Naive thymus-derived CD4-positive, alpha-beta T cell (primary cell): ENCODE measurements at regions of chr2 and their contacts with region 1.

Region 1: GRCh38 chr2:108607706-108608301 is 73.5 kb downstream of the LIMS1 start:
- DNase-seq: peak in 7 of 9 donors; percentile 30 to 61 (median 53)
- ATAC-seq: peak; percentile 45
- H3K4me3 ChIP-seq: no peak overlapping the region
- H3K4me3 Mint-ChIP-seq: no peak overlapping the region
- H3K27ac ChIP-seq: no peak overlapping the region
- H3K27ac Mint-ChIP-seq: no peak overlapping the region
- H3K4me1 ChIP-seq: peaks cover 4 to 14% of the 10 kb centered on the region in 2 donors
- H3K4me1 Mint-ChIP-seq: peaks cover 20 to 68% (median 26%) of the 10 kb centered on the region in 7 donors
- H3K27me3 ChIP-seq: no peaks in the 10 kb centered on the region
- H3K27me3 Mint-ChIP-seq: no peaks in the 10 kb centered on the region

Region 2: DNA sequence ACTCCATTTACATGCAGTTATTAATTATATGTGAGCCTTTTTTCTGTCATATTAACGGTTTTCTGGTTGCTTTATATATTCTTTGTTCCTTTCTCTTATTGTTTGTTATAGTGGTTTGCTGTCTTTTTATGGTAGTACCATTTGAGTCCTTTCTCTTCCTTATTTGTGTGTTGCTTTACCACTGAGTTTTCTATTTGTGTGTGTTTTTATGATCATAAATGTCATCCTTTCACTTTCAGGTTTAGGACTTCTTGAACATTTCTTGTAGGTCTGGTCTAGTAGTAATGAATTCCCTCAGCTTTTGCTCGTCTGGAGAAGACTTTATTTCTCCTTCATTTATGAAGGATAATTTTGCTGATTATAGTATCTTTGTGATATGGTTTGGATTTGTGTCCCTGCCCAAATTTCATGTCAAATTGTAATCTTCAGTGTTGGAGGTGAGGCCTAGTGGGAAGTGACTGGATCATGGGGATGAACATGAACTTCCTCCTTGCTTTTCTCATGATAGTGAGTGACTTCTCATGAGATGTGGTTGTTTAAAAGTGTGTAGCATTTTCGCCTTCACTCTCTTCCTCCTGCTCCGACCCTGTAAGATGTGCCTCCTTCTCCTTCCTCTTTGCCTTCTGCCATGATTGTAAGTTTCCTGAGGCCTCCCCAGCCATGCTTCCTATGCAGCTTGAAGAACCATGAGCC is 147.3 kb before region 1 on chr2:
- CTCF ChIA-PET with region 1: no interaction called
- POLR2A ChIA-PET with region 1: no interaction called
- intact Hi-C with region 1: no loop called
- DNase-seq: no peak
- ATAC-seq: no peak
- H3K4me3 ChIP-seq: no peak overlapping the region
- H3K4me3 Mint-ChIP-seq: peak overlapping the region in 4 of 10 donors; percentile 2 to 28 (median 22)
- H3K27ac ChIP-seq: no peak overlapping the region
- H3K27ac Mint-ChIP-seq: peak overlapping the region in 6 of 9 donors; percentile 14 to 69 (median 29)
- H3K4me1 ChIP-seq: peaks cover 0 to 3% of the 10 kb centered on the region in 2 donors
- H3K4me1 Mint-ChIP-seq: peaks cover 27 to 82% (median 74%) of the 10 kb centered on the region in 7 donors
- H3K27me3 ChIP-seq: no peaks in the 10 kb centered on the region
- H3K27me3 Mint-ChIP-seq: no peaks in the 10 kb centered on the region

Region 3: GRCh38 chr2:108587621-108588020 is 20.2 kb before region 1 on chr2:
- CTCF ChIA-PET with region 1: no interaction called
- POLR2A ChIA-PET with region 1: no interaction called
- intact Hi-C with region 1: no loop called
- DNase-seq: no peak
- ATAC-seq: peak; percentile 28
- H3K4me3 ChIP-seq: no peak overlapping the region
- H3K4me3 Mint-ChIP-seq: no peak overlapping the region
- H3K27ac ChIP-seq: no peak overlapping the region
- H3K27ac Mint-ChIP-seq: peak overlapping the region in 5 of 9 donors; percentile 7 to 65 (median 40)
- H3K4me1 ChIP-seq: no peaks in the 10 kb centered on the region
- H3K4me1 Mint-ChIP-seq: peaks cover 14 to 44% (median 25%) of the 10 kb centered on the region in 7 donors
- H3K27me3 ChIP-seq: no peaks in the 10 kb centered on the region
- H3K27me3 Mint-ChIP-seq: no peaks in the 10 kb centered on the region

Region 4: DNA sequence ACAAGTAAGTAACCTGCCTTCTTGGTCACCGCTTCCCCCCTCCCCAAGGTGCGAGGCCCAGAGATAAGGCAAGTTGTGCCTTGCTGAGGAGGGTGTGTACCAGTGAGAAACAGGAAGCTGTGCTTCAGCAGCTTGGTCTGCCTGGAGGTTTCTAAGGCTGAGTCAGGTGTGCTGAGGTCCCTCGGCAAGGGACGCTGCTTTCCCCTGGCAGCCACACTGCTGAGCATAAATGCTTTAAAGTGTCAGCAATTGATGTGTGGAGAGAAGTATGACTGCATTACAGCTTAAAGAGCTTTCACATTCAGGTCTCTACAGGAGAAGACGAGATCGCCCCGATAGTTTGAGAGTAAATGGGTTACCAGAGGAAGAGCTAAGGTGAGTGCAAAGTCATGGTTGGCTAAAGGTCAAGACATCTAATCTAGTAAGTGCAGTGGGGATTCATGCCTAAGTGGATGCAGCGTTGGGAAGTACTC is 13.3 kb after region 1 on chr2:
- CTCF ChIA-PET with region 1: interaction called, 10 read pairs
- POLR2A ChIA-PET with region 1: interaction called, 13 read pairs
- intact Hi-C with region 1: loop called (anchors 1 kb)
- DNase-seq: peak; percentile 32 to 80 (median 75)
- ATAC-seq: peak; percentile 97
- H3K4me3 ChIP-seq: peak overlapping the region; percentile 59
- H3K4me3 Mint-ChIP-seq: peak overlapping the region; percentile 87 to 96 (median 91)
- H3K27ac ChIP-seq: peak overlapping the region; percentile 74
- H3K27ac Mint-ChIP-seq: peak overlapping the region; percentile 91 to 97 (median 94)
- H3K4me1 ChIP-seq: peaks cover 36 to 64% of the 10 kb centered on the region in 2 donors
- H3K4me1 Mint-ChIP-seq: peaks cover 44 to 93% (median 84%) of the 10 kb centered on the region in 7 donors
- H3K27me3 ChIP-seq: no peaks in the 10 kb centered on the region
- H3K27me3 Mint-ChIP-seq: no peaks in the 10 kb centered on the region

Region 5: DNA sequence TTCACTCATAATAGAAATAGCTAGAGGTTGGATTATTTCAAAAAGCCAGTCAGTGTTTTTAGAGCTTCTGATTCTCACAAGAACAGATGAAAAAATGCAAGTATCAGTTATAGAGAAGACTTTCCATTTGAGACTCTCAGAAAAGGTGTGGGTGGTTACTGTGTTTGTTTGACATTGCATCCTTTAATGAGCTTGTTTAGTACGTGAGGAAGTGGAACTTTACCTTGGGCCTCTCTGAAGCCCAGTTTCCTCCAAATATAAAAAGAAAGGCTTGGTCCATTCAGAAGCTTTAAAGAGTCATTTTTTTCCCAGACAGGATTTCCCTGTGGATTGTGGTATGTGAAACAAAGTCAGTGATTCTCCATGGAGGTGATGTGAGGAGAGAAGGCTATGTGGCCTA is 21.6 kb after region 1 on chr2:
- CTCF ChIA-PET with region 1: interaction called, 136 read pairs
- POLR2A ChIA-PET with region 1: interaction called, 11 read pairs
- intact Hi-C with region 1: loop called in 1 of 2 experiments (anchors 2 kb)
- DNase-seq: no peak
- ATAC-seq: peak; percentile 54
- H3K4me3 ChIP-seq: no peak overlapping the region
- H3K4me3 Mint-ChIP-seq: peak overlapping the region in 8 of 10 donors; percentile 1 to 65 (median 42)
- H3K27ac ChIP-seq: peak overlapping the region; percentile 39
- H3K27ac Mint-ChIP-seq: peak overlapping the region; percentile 32 to 83 (median 76)
- H3K4me1 ChIP-seq: peaks cover 14 to 22% of the 10 kb centered on the region in 2 donors
- H3K4me1 Mint-ChIP-seq: peaks cover 38 to 86% (median 74%) of the 10 kb centered on the region in 7 donors
- H3K27me3 ChIP-seq: no peaks in the 10 kb centered on the region
- H3K27me3 Mint-ChIP-seq: no peaks in the 10 kb centered on the region

Region 6: DNA sequence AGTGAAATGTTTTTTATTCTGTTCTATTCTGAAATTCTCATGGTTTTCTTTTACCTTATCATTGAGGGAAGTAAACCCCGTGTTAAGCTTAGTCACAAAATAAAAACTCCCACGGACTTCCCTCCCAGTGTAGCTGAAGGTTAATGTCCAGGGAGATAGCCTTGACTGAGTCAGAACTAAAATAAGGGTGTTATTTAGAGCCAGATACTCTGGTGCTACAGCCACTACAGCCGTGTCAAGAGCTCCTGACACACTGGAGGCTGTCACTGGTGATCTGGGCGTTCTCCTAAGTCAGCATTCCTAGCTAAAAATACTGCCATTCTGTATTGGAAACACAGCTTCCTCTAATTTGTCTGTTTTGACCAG is 29.5 kb after region 1 on chr2:
- CTCF ChIA-PET with region 1: interaction called, 136 read pairs
- POLR2A ChIA-PET with region 1: interaction called, 11 read pairs
- intact Hi-C with region 1: loop called (anchors 1 kb)
- DNase-seq: no peak
- ATAC-seq: peak; percentile 79
- H3K4me3 ChIP-seq: no peak overlapping the region
- H3K4me3 Mint-ChIP-seq: no peak overlapping the region
- H3K27ac ChIP-seq: no peak overlapping the region
- H3K27ac Mint-ChIP-seq: no peak overlapping the region
- H3K4me1 ChIP-seq: no peaks in the 10 kb centered on the region
- H3K4me1 Mint-ChIP-seq: peaks cover 14 to 65% (median 35%) of the 10 kb centered on the region in 7 donors
- H3K27me3 ChIP-seq: no peaks in the 10 kb centered on the region
- H3K27me3 Mint-ChIP-seq: no peaks in the 10 kb centered on the region

Region 7: DNA sequence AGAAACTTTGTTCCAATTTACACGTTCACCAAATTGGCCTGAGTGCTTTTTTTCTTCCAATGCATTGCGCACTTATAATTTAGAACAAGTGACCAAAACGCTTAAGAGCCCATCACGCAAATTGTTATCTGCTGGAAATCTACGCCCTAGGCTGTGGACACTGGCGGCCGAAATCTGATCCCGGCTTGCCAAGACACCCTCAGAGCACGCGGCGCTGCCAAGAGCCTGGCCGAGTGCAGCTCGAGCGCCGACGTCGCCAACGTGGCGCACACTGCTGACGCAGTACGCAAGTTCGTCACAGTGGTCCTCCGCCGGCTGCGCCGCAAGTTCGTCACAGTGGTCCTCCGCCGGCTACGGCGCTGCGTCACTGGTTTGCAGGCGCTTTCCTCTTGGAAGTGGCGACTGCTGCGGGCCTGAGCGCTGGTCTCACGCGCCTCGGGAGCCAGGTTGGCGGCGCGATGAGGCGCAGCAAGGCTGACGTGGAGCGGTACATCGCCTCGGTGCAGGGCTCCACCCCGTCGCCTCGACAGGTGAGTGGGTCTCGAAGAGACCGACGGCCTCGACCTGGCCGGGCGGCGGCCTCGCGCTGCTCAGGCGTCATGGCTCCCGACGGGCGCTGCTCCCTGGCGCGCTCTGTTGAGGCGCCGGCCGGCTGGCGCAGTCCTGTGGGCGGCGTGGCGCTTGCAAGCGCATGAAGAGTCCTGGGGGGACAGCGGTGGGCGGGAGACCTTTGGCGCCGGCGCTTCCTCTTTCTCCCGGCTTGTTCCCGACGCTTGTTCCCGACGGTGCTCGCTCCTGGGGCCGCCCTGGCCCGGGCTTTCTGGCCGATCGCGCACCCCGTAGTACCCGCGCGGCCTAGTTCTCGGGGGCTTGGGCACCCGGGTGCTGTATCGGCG is 111.6 kb after region 1 on chr2 and contains the start of gene RANBP2:
- CTCF ChIA-PET with region 1: no interaction called
- POLR2A ChIA-PET with region 1: interaction called, 3 read pairs
- intact Hi-C with region 1: loop called (anchors 1 to 2 kb)
- DNase-seq: peak; percentile 86 to 95 (median 93)
- ATAC-seq: peak; percentile 98
- H3K4me3 ChIP-seq: peak within 1 kb of the TSS; percentile 97
- H3K4me3 Mint-ChIP-seq: peak within 1 kb of the TSS; percentile 94 to 98 (median 97)
- H3K27ac ChIP-seq: peak within 1 kb of the TSS; percentile 96
- H3K27ac Mint-ChIP-seq: peak within 1 kb of the TSS; percentile 97 to 99 (median 99)
- H3K4me1 ChIP-seq: peaks cover 5 to 6% of the 10 kb centered on the region in 2 donors
- H3K4me1 Mint-ChIP-seq: peaks cover 14 to 43% (median 31%) of the 10 kb centered on the region in 7 donors
- H3K27me3 ChIP-seq: no peaks in the 10 kb centered on the region
- H3K27me3 Mint-ChIP-seq: no peaks in the 10 kb centered on the region
- total RNA-seq, gene RANBP2: 63.4 to 118 (median 88.6) TPM